ENCODE measurements at regions of chr3 and their contacts with region 1.

Region 1: GRCh38 chr3:52220380-52221026 is 4.9 kb downstream of the TLR9 start:
- DNase-seq: peak; percentile 82 to 95 (median 88)
- ATAC-seq: peak; percentile 61
- H3K4me3 ChIP-seq: no peak overlapping the region
- H3K4me3 Mint-ChIP-seq: peak overlapping the region; percentile 77
- H3K27ac ChIP-seq: no peak overlapping the region
- H3K27ac Mint-ChIP-seq: peak overlapping the region; percentile 76
- H3K4me1 ChIP-seq: peaks cover 100% of the 10 kb centered on the region
- H3K4me1 Mint-ChIP-seq: peaks cover 91% of the 10 kb centered on the region
- H3K27me3 ChIP-seq: no peaks in the 10 kb centered on the region
- H3K27me3 Mint-ChIP-seq: no peaks in the 10 kb centered on the region
- CTCF ChIP-seq: peak; percentile 83

Region 2: GRCh38 chr3:52070724-52071621 is 149.5 kb before region 1 on chr3:
- CTCF ChIA-PET with region 1: no interaction called
- POLR2A ChIA-PET with region 1: no interaction called
- intact Hi-C with region 1: no loop called
- DNase-seq: peak in 2 of 14 experiments; percentile 24 to 41
- ATAC-seq: no peak
- H3K4me3 ChIP-seq: no peak overlapping the region
- H3K4me3 Mint-ChIP-seq: no peak overlapping the region
- H3K27ac ChIP-seq: no peak overlapping the region
- H3K27ac Mint-ChIP-seq: no peak overlapping the region
- H3K4me1 ChIP-seq: peaks cover 8% of the 10 kb centered on the region
- H3K4me1 Mint-ChIP-seq: no peaks in the 10 kb centered on the region
- H3K27me3 ChIP-seq: no peaks in the 10 kb centered on the region
- H3K27me3 Mint-ChIP-seq: no peaks in the 10 kb centered on the region
- CTCF ChIP-seq: no peak

Region 3: GRCh38 chr3:52210037-52210436 is 10.5 kb before region 1 on chr3:
- CTCF ChIA-PET with region 1: interaction called, 10 read pairs
- POLR2A ChIA-PET with region 1: interaction called, 3 read pairs
- intact Hi-C with region 1: no loop called
- DNase-seq: no peak
- ATAC-seq: no peak
- H3K4me3 ChIP-seq: no peak overlapping the region
- H3K4me3 Mint-ChIP-seq: no peak overlapping the region
- H3K27ac ChIP-seq: no peak overlapping the region
- H3K27ac Mint-ChIP-seq: no peak overlapping the region
- H3K4me1 ChIP-seq: peaks cover 7% of the 10 kb centered on the region
- H3K4me1 Mint-ChIP-seq: no peaks in the 10 kb centered on the region
- H3K27me3 ChIP-seq: no peaks in the 10 kb centered on the region
- H3K27me3 Mint-ChIP-seq: no peaks in the 10 kb centered on the region
- CTCF ChIP-seq: no peak

Region 4: GRCh38 chr3:52231502-52232293 is 11.2 kb after region 1 on chr3:
- CTCF ChIA-PET with region 1: interaction called, 27 read pairs
- POLR2A ChIA-PET with region 1: interaction called, 74 read pairs
- intact Hi-C with region 1: no loop called
- DNase-seq: peak; percentile 70 to 94 (median 88)
- ATAC-seq: peak; percentile 75
- H3K4me3 ChIP-seq: no peak overlapping the region
- H3K4me3 Mint-ChIP-seq: peak overlapping the region; percentile 30
- H3K27ac ChIP-seq: peak overlapping the region in 1 of 2 donors; percentile 43
- H3K27ac Mint-ChIP-seq: peak overlapping the region; percentile 72
- H3K4me1 ChIP-seq: peaks cover 73% of the 10 kb centered on the region
- H3K4me1 Mint-ChIP-seq: peaks cover 56% of the 10 kb centered on the region
- H3K27me3 ChIP-seq: no peaks in the 10 kb centered on the region
- H3K27me3 Mint-ChIP-seq: no peaks in the 10 kb centered on the region
- CTCF ChIP-seq: peak; percentile 67

Region 5: DNA sequence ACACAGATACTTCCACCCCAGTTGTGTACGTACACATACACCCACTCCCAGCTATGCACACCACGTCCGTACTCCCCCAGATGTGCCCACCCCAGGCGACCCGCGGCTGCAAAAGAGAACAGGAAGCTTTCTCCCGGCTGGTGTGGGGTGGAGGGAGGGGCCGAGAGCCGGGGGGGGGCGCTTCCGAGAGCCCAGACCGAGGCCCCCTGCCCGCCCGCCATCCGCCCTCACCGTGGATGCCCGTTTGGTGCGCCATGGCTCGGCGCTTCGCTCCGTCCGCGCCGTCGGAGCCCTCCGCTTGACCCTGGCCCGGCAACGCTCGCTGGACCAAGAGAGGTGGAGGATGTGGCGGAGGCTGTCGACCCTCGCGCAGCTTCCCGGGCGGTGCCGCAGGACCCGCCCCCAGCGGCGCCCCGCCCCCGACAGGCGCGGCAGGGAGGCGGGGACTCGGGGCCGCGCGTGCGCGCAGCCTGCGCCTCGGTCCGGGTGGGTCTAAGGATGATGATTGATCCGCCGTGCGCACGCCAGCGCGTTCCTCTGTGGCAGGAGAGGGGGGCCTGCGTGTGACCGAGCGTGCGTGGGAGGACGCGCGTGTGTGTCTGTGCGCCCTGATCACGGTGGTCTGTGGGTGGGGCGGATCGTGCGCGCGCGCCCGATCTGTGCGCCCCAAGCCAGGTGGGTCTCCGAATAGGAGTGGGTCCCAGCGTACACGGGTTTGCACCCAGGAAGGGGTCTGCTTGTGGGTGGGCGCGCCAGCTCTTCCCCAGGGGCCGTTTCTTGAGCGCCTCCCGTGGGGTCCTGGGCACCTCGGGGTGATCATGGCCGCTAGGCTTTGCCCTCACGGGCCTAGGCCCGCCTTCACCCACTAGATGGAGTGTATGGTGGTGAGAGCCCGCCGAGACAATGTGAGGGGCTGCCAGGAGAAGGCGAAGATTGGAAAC is 18.5 kb after region 1 on chr3 and contains the start of gene TWF2:
- CTCF ChIA-PET with region 1: interaction called, 19 read pairs
- POLR2A ChIA-PET with region 1: interaction called, 74 read pairs
- intact Hi-C with region 1: loop called in 1 of 2 experiments (anchors 1 kb)
- DNase-seq: peak; percentile 69 to 93 (median 84)
- ATAC-seq: peak; percentile 79
- H3K4me3 ChIP-seq: peak within 1 kb of the TSS; percentile 99
- H3K4me3 Mint-ChIP-seq: peak within 1 kb of the TSS; percentile 99
- H3K27ac ChIP-seq: peak within 1 kb of the TSS; percentile 81 to 95
- H3K27ac Mint-ChIP-seq: peak within 1 kb of the TSS; percentile 99
- H3K4me1 ChIP-seq: peaks cover 80% of the 10 kb centered on the region
- H3K4me1 Mint-ChIP-seq: peaks cover 86% of the 10 kb centered on the region
- H3K27me3 ChIP-seq: no peaks in the 10 kb centered on the region
- H3K27me3 Mint-ChIP-seq: no peaks in the 10 kb centered on the region
- CTCF ChIP-seq: peak; percentile 63
- total RNA-seq, gene TWF2: 17.4 to 21.7 TPM

Region 6: DNA sequence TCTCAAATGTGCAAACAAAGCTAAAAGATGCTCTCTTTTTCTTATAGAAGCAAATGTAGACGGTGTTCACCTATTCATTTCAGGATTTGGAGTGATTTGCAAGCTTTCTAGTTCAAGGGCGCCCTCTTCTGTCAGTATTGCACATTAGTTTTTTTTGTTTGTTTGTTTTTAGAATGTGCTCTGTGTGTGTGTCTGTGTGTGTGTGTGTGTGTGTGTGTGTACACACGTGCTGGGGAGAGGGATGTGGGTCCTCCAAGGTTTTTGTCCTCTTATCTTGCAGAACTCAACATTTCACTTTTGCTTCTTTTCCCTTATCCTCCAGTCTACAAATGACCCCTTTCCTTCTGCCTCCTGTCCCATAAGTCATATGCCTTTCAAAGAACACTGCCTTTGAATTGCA is 119.1 kb after region 1 on chr3:
- CTCF ChIA-PET with region 1: interaction called, 49 read pairs
- POLR2A ChIA-PET with region 1: interaction called, 13 read pairs
- intact Hi-C with region 1: loop called (anchors 1 kb)
- DNase-seq: peak in 13 of 14 experiments; percentile 7 to 87 (median 28)
- ATAC-seq: peak; percentile 76
- H3K4me3 ChIP-seq: no peak overlapping the region
- H3K4me3 Mint-ChIP-seq: no peak overlapping the region
- H3K27ac ChIP-seq: no peak overlapping the region
- H3K27ac Mint-ChIP-seq: no peak overlapping the region
- H3K4me1 ChIP-seq: no peaks in the 10 kb centered on the region
- H3K4me1 Mint-ChIP-seq: peaks cover 11% of the 10 kb centered on the region
- H3K27me3 ChIP-seq: no peaks in the 10 kb centered on the region
- H3K27me3 Mint-ChIP-seq: no peaks in the 10 kb centered on the region
- CTCF ChIP-seq: peak; percentile 85

Region 7: GRCh38 chr3:52406231-52406661 is 185.7 kb after region 1 on chr3:
- CTCF ChIA-PET with region 1: no interaction called
- POLR2A ChIA-PET with region 1: no interaction called
- intact Hi-C with region 1: loop called in 1 of 2 experiments (anchors 5 kb)
- DNase-seq: peak in 2 of 14 experiments; percentile 1 to 7
- ATAC-seq: no peak
- H3K4me3 ChIP-seq: no peak overlapping the region
- H3K4me3 Mint-ChIP-seq: peak overlapping the region; percentile 38
- H3K27ac ChIP-seq: no peak overlapping the region
- H3K27ac Mint-ChIP-seq: no peak overlapping the region
- H3K4me1 ChIP-seq: peaks cover 39% of the 10 kb centered on the region
- H3K4me1 Mint-ChIP-seq: peaks cover 22% of the 10 kb centered on the region
- H3K27me3 ChIP-seq: no peaks in the 10 kb centered on the region
- H3K27me3 Mint-ChIP-seq: no peaks in the 10 kb centered on the region
- CTCF ChIP-seq: no peak

Region 8: GRCh38 chr3:52444860-52445793 is 224.6 kb after region 1 on chr3 and contains the start of gene SEMA3G:
- CTCF ChIA-PET with region 1: no interaction called
- POLR2A ChIA-PET with region 1: interaction called, 3 read pairs
- intact Hi-C with region 1: loop called (anchors 2 to 5 kb)
- DNase-seq: peak; percentile 55 to 86 (median 70)
- ATAC-seq: peak; percentile 96
- H3K4me3 ChIP-seq: peak within 1 kb of the TSS; percentile 29
- H3K4me3 Mint-ChIP-seq: no peak within 1 kb of the TSS
- H3K27ac ChIP-seq: no peak within 1 kb of the TSS
- H3K27ac Mint-ChIP-seq: no peak within 1 kb of the TSS
- H3K4me1 ChIP-seq: peaks cover 28% of the 10 kb centered on the region
- H3K4me1 Mint-ChIP-seq: peaks cover 14% of the 10 kb centered on the region
- H3K27me3 ChIP-seq: no peaks in the 10 kb centered on the region
- H3K27me3 Mint-ChIP-seq: no peaks in the 10 kb centered on the region
- CTCF ChIP-seq: peak; percentile 32
- total RNA-seq, gene SEMA3G: 0.34 to 0.69 TPM

Measured in CD4-positive, alpha-beta T cell (primary cell).